Activated CD4-positive, alpha-beta memory T cell treated with anti-CD3 and anti-CD28 coated beads, Interleukin-2, amount 10 ng/mL, durations not matched to agents 7 days and 5 days (primary cell): ENCODE measurements at regions of chr5 and their contacts with region 1.

Region 1: DNA sequence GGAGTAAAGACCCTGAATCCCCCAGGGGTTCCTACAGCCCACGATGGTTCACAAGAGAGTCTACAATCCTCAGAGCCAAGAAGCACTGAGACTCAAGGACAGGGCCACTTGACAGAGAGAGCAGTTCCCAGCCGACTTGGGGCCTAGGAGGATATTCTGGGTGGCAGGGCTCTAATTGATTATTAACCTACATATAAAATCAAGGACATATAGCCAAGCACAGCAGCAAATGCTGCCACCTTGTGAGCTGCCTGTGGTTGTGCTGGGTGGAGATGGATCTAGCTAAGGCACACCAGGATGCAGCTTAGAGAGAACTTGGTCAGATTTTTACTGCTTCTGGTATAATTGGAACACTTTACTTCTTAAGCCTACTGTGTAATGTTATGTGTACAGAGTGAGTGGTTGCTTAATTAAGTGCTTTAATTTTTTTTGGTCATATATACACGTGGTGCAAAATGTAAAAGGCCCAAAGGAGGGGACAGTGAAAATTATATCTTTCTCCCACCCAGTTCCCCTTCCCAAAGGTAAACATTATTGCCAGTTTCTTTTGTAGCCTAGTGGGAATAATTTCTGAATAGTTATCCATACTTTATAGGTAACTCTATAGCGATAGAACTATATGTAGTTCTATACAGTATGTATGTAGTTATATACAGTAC is 78.8 kb downstream of the F2RL2 start:
- DNase-seq: peak; percentile 73
- H3K4me3 Mint-ChIP-seq: peak overlapping the region; percentile 75
- H3K27ac Mint-ChIP-seq: peak overlapping the region; percentile 99
- H3K4me1 Mint-ChIP-seq: peaks cover 93% of the 10 kb centered on the region
- H3K27me3 Mint-ChIP-seq: no peaks in the 10 kb centered on the region

Region 2: DNA sequence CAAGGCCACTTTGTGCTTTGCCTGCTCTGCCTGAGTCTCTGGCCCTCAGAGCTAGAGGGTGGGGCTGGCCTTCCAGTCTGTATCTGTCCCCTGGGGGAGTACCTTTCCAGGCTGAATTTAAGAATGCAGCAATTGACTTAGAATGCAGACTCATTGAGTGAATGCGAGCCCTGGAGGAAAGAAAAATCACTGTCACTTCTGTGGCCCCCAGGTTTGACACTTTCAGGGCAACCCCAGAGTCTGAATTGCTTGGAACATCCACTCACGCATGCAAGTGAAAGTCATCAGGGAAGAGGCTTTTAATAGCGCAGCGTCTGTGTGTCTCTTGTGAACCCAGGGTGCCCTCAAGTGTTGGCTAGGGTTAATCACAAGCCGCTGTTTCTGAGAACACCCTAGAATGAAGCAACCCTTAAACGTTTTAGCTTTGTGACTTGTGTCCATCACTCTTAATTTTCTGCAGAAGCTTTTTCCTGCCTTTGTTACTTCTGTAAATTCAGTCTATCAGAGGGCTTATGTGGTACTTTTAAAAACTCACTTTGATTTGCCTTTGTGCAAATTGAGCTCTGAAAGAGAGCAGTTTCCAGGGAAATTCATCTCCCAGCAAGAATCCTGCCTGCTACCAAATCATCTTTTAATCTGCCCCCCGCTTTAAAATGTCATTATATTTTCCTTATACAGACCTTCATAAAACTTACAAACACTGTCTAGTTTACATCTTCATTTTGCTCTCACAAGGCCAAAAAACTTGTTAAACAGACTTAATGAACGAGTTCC is 288.1 kb before region 1 on chr5:
- CTCF ChIA-PET with region 1: interaction called, 14 read pairs
- POLR2A ChIA-PET with region 1: interaction called, 4 read pairs
- DNase-seq: peak; percentile 75
- H3K4me3 Mint-ChIP-seq: no peak overlapping the region
- H3K27ac Mint-ChIP-seq: no peak overlapping the region
- H3K4me1 Mint-ChIP-seq: peaks cover 10% of the 10 kb centered on the region
- H3K27me3 Mint-ChIP-seq: peaks cover 16% of the 10 kb centered on the region

Region 3: DNA sequence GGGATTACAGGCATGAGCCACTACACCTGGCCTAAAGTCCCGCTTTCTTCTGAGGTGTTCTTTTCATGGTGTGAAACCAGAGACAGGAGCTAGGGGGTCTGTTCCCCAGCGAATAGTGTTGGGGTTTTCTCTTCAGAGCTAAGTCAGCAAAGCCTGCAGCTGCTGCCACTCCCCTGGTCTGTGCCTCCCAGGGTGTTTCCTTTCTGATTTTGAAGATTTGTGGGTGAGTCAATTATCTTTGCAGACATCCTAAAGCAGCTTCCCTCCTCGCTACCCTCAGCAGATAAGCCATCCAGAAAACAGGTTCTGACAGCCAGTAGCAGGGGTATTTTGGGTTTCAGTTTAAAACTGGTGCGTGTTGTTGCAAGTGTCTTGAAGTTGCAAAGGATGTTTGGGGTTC is 213.3 kb before region 1 on chr5:
- CTCF ChIA-PET with region 1: interaction called, 20 read pairs
- POLR2A ChIA-PET with region 1: interaction called, 49 read pairs
- DNase-seq: peak; percentile 69
- H3K4me3 Mint-ChIP-seq: peak overlapping the region; percentile 19
- H3K27ac Mint-ChIP-seq: peak overlapping the region; percentile 95
- H3K4me1 Mint-ChIP-seq: peaks cover 77% of the 10 kb centered on the region
- H3K27me3 Mint-ChIP-seq: no peaks in the 10 kb centered on the region

Region 4: DNA sequence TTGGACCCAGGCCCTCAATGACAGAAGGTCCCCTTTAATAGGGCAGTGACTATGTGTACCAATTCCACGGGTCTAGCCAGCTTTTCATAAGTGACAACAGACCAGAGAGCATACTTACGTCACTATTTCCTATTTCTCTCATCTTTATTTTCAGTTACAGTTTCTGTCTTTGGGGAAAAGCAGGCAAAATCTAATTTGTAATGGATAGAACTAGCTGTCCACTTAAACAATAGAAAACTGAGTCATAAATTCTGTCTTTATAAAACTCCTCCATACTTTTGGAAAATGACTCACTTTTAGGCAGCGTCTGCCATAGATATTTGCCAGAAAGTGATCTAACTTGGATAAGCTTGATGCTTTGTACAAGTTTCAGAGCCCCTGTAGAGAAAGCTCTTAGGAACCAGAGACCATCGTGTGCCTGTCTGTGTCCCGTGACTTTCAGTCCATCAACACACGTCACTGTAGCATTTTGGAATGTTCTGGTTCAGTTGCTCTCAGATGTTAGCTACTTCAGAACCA is 23.1 kb before region 1 on chr5:
- CTCF ChIA-PET with region 1: interaction called, 5 read pairs
- POLR2A ChIA-PET with region 1: interaction called, 10 read pairs
- DNase-seq: no peak
- H3K4me3 Mint-ChIP-seq: peak overlapping the region; percentile 1
- H3K27ac Mint-ChIP-seq: peak overlapping the region; percentile 24
- H3K4me1 Mint-ChIP-seq: peaks cover 38% of the 10 kb centered on the region
- H3K27me3 Mint-ChIP-seq: no peaks in the 10 kb centered on the region

Region 5: DNA sequence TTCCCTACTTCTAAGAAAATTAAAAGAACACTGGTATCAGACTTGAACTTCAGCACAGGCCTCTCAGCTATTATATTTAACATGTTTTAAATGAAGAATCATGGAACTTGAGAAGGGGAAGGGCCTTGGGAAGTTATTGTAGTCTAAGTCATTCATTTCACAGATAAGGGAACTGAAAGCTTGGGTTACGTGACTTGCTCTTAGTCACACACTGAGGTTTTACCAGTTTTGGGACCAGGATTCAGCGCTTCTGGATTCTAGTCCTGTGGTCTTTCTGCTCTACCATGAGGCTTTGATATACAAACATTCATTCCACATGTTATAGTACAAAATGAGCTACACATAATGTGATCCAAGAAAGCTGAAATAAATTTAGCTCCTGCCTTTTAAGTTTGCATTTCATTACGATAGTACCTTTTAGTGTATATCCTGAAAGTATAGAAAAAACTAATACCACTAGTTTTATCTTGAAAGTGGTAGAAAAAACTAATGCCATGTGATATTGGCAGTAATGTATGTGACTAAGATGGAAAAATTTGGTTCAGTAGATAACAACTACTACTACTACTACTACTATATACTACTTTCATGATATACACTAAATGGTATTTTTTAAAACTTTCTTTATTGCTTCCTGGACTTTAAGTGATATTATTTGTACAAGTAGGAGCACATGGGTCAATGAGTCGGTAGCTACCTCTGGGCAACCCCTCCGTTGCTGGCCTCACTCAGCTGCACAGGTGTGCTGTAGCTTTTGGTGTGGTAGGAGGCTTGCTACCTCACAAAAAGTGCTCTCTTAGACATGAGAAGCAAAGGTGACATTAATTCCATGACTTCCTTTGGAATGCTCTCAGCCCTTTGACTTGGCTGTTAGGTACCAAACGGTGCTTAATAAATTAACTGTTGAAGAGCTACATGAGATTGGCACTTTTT is 38.1 kb after region 1 on chr5:
- CTCF ChIA-PET with region 1: interaction called, 23 read pairs
- POLR2A ChIA-PET with region 1: interaction called, 24 read pairs
- DNase-seq: no peak
- H3K4me3 Mint-ChIP-seq: no peak overlapping the region
- H3K27ac Mint-ChIP-seq: peak overlapping the region; percentile 26
- H3K4me1 Mint-ChIP-seq: peaks cover 29% of the 10 kb centered on the region
- H3K27me3 Mint-ChIP-seq: no peaks in the 10 kb centered on the region